ENCODE measurements at regions of chr16 and their contacts with region 1.

Region 1: DNA sequence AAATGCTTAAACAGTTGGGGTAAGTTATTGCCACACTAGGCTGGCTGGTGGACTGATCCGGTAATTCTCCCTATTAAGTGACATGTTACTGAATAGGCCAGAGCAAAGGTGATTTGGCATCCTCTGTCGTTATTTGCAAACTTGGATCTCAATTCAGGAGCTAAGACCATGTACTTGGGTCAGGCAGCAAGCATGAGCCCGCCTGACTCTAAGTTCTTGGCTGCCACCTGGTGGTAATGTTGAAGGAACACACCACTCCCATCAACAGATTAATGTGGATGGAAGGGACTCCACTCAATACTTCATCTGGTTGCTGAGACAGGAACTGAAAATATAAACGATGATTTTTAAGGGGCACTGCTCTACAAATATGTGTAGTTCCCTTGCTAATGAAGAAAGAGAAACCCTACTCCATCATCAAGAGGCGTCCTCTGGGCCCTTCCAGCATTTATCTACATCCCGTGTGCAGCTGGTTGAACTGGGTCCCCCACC is 70.8 kb downstream of the EMP2 start:
- DNase-seq: peak; percentile 72
- H3K4me3 Mint-ChIP-seq: no peak overlapping the region
- H3K27ac Mint-ChIP-seq: no peak overlapping the region
- H3K4me1 Mint-ChIP-seq: no peaks in the 10 kb centered on the region
- H3K27me3 Mint-ChIP-seq: peaks cover 5% of the 10 kb centered on the region

Region 2: GRCh38 chr16:10256784-10257641 is 252.6 kb before region 1 on chr16:
- CTCF ChIA-PET with region 1: interaction called, 18 read pairs
- DNase-seq: peak; percentile 48
- H3K4me3 Mint-ChIP-seq: no peak overlapping the region
- H3K27ac Mint-ChIP-seq: no peak overlapping the region
- H3K4me1 Mint-ChIP-seq: peaks cover 7% of the 10 kb centered on the region
- H3K27me3 Mint-ChIP-seq: peaks cover 24% of the 10 kb centered on the region

Region 3: GRCh38 chr16:10314811-10315210 is 194.8 kb before region 1 on chr16:
- CTCF ChIA-PET with region 1: interaction called, 35 read pairs
- DNase-seq: no peak
- H3K4me3 Mint-ChIP-seq: no peak overlapping the region
- H3K27ac Mint-ChIP-seq: no peak overlapping the region
- H3K4me1 Mint-ChIP-seq: peaks cover 15% of the 10 kb centered on the region
- H3K27me3 Mint-ChIP-seq: peaks cover 8% of the 10 kb centered on the region

Region 4: GRCh38 chr16:10737068-10737625 is 227.6 kb after region 1 on chr16:
- CTCF ChIA-PET with region 1: interaction called, 43 read pairs
- DNase-seq: peak; percentile 79
- H3K4me3 Mint-ChIP-seq: peak overlapping the region; percentile 51
- H3K27ac Mint-ChIP-seq: peak overlapping the region; percentile 62
- H3K4me1 Mint-ChIP-seq: peaks cover 48% of the 10 kb centered on the region
- H3K27me3 Mint-ChIP-seq: peaks cover 3% of the 10 kb centered on the region

Region 5: DNA sequence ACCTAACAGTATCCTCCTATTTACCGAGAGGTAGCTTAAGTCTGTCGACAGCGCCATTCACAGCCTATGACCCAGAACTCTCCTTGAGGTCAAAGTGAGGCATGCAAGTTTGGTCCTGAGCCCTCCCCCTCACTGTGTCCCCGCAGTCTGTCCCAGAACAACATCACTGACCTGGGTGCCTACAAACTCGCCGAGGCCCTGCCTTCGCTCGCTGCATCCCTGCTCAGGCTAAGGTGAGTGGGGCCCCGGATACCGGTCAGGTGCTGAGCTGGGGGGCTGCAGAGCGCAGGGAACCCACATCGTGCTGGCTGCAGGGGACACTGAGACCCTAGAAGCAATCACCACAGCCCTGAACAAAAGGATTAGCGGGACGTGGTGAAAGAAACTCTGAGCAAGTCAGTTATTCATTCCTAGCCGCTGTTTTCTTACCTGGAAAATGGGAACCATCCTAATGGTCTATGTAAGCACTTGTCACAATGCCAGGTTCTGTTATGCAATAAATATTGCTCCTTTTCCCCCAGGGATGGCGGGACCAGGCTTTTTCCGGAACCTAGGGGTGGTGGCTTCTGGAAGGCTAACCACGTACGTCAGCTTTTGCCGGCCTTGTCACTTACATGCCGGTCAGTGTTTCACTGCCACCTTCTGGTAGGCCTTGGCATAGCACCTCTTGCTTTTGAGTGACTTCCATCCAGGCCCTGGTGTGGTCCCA is 408.9 kb after region 1 on chr16:
- CTCF ChIA-PET with region 1: interaction called, 33 read pairs
- DNase-seq: peak; percentile 90
- H3K4me3 Mint-ChIP-seq: no peak overlapping the region
- H3K27ac Mint-ChIP-seq: no peak overlapping the region
- H3K4me1 Mint-ChIP-seq: peaks cover 4% of the 10 kb centered on the region
- H3K27me3 Mint-ChIP-seq: no peaks in the 10 kb centered on the region